Psoas muscle (tissue), 8 donors: ENCODE measurements at regions of chr17 and their contacts with region 1.

Region 1: GRCh38 chr17:30906101-30906911 is at the start of gene TEFM:
- DNase-seq: peak; percentile 89 to 94
- ATAC-seq: peak; percentile 99 to 100 (median 99)
- H3K4me3 ChIP-seq: peak within 1 kb of the TSS; percentile 94
- H3K27ac ChIP-seq: peak within 1 kb of the TSS; percentile 88
- H3K4me1 ChIP-seq: peaks cover 14% of the 10 kb centered on the region
- H3K27me3 ChIP-seq: no peaks in the 10 kb centered on the region
- CTCF ChIP-seq: no peak
- total RNA-seq, gene TEFM: 8.0 to 12.5 (median 9.8) TPM

Region 2: GRCh38 chr17:30824356-30825145 is 81.8 kb before region 1 on chr17 and contains the start of gene CRLF3:
- intact Hi-C with region 1: loop called in 1 of 2 experiments (anchors 5 kb)
- DNase-seq: peak; percentile 92 to 95
- ATAC-seq: peak; percentile 98 to 99 (median 99)
- H3K4me3 ChIP-seq: peak within 1 kb of the TSS; percentile 98
- H3K27ac ChIP-seq: peak within 1 kb of the TSS; percentile 80
- H3K4me1 ChIP-seq: peaks cover 15% of the 10 kb centered on the region
- H3K27me3 ChIP-seq: no peaks in the 10 kb centered on the region
- CTCF ChIP-seq: peak; percentile 59
- total RNA-seq, gene CRLF3: 3.9 to 5.0 (median 4.2) TPM

Region 3: DNA sequence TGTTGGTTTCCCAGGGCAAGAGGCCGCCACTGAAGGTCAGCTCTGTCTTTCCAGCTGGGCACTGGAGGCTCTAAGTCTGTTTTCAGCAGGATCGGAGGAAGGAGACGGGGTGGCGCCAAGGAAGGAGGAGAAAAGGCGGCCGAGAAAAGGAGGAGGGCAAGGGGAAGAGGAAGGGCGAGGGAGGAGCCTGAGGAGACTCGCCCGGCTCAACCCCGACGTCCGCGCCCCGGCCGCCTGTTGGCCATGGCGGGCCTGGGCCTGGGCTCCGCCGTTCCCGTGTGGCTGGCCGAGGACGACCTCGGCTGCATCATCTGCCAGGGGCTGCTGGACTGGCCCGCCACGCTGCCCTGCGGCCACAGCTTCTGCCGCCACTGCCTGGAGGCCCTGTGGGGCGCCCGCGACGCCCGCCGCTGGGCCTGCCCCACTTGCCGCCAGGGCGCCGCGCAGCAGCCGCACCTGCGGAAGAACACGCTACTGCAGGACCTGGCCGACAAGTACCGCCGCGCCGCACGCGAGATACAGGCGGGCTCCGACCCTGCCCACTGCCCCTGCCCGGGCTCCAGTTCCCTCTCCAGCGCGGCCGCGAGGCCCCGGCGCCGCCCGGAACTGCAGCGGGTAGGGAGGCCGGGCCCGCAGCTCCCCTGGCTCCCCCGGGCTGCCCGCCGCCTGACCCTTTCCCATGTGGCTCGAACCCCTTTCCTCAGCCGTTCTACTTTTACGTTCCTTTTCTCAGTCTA is 64.7 kb after region 1 on chr17 and contains the start of gene RNF135:
- intact Hi-C with region 1: loop called in 1 of 2 experiments (anchors 2 kb)
- DNase-seq: peak; percentile 82 to 87
- ATAC-seq: peak; percentile 89 to 93 (median 91)
- H3K4me3 ChIP-seq: peak within 1 kb of the TSS; percentile 92
- H3K27ac ChIP-seq: peak within 1 kb of the TSS; percentile 89
- H3K4me1 ChIP-seq: no peaks in the 10 kb centered on the region
- H3K27me3 ChIP-seq: no peaks in the 10 kb centered on the region
- CTCF ChIP-seq: peak; percentile 43
- total RNA-seq, gene RNF135: 5.8 to 7.3 (median 6.8) TPM

Region 4: GRCh38 chr17:31216053-31216751 is 309.9 kb after region 1 on chr17:
- intact Hi-C with region 1: loop called in 1 of 2 experiments (anchors 10 kb)
- DNase-seq: no peak
- ATAC-seq: peak in 3 of 4 donors; percentile 57 to 84 (median 58)
- H3K4me3 ChIP-seq: no peak overlapping the region
- H3K27ac ChIP-seq: no peak overlapping the region
- H3K4me1 ChIP-seq: peaks cover 8% of the 10 kb centered on the region
- H3K27me3 ChIP-seq: no peaks in the 10 kb centered on the region
- CTCF ChIP-seq: peak; percentile 65